GM12878 (cell line): ENCODE measurements at regions of chrX and their contacts with region 1.

Region 1: GRCh38 chrX:16123222-16123786 is at the start of gene GRPR:
- DNase-seq: no peak
- ATAC-seq: peak; percentile 88
- H3K4me3 ChIP-seq: no peak within 1 kb of the TSS
- H3K27ac ChIP-seq: no peak within 1 kb of the TSS
- H3K4me1 ChIP-seq: peaks cover 15% of the 10 kb centered on the region
- H3K27me3 ChIP-seq: peaks cover 0 to 2% of the 10 kb centered on the region in 2 experiments; a peak in 1 of 4 replicates
- CTCF ChIP-seq: peak; percentile 76 to 83 (median 79)
- EP300 ChIP-seq: no peak
- POLR2A ChIP-seq: no peak
- RAD21 ChIP-seq: peak; percentile 61
- polyA plus RNA-seq, gene GRPR: 0.21 TPM in 1 of 2 experiments, not detected in the other

Region 2: GRCh38 chrX:15686818-15687685 is 436.3 kb before region 1 on chrX:
- CTCF ChIA-PET with region 1: no interaction called
- POLR2A ChIA-PET with region 1: no interaction called
- RAD21 ChIA-PET with region 1: no interaction called
- SMC1A ChIA-PET with region 1: no interaction called
- in situ Hi-C with region 1: no loop called
- intact Hi-C with region 1: loop called (anchors 10 kb)
- DNase-seq: peak; percentile 34
- ATAC-seq: peak; percentile 97
- H3K4me3 ChIP-seq: no peak overlapping the region
- H3K27ac ChIP-seq: no peak overlapping the region
- H3K4me1 ChIP-seq: no peaks in the 10 kb centered on the region
- H3K27me3 ChIP-seq: no peaks in the 10 kb centered on the region
- CTCF ChIP-seq: peak; percentile 85
- EP300 ChIP-seq: no peak
- POLR2A ChIP-seq: no peak
- RAD21 ChIP-seq: peak; percentile 74

Region 3: GRCh38 chrX:16012250-16012649 is 111.1 kb before region 1 on chrX:
- CTCF ChIA-PET with region 1: no interaction called
- POLR2A ChIA-PET with region 1: no interaction called
- RAD21 ChIA-PET with region 1: no interaction called
- SMC1A ChIA-PET with region 1: no interaction called
- in situ Hi-C with region 1: no loop called
- intact Hi-C with region 1: no loop called
- DNase-seq: no peak
- ATAC-seq: no peak
- H3K4me3 ChIP-seq: no peak overlapping the region
- H3K27ac ChIP-seq: no peak overlapping the region
- H3K4me1 ChIP-seq: no peaks in the 10 kb centered on the region
- H3K27me3 ChIP-seq: no peaks in the 10 kb centered on the region
- CTCF ChIP-seq: no peak
- EP300 ChIP-seq: no peak
- POLR2A ChIP-seq: no peak
- RAD21 ChIP-seq: no peak

Region 4: DNA sequence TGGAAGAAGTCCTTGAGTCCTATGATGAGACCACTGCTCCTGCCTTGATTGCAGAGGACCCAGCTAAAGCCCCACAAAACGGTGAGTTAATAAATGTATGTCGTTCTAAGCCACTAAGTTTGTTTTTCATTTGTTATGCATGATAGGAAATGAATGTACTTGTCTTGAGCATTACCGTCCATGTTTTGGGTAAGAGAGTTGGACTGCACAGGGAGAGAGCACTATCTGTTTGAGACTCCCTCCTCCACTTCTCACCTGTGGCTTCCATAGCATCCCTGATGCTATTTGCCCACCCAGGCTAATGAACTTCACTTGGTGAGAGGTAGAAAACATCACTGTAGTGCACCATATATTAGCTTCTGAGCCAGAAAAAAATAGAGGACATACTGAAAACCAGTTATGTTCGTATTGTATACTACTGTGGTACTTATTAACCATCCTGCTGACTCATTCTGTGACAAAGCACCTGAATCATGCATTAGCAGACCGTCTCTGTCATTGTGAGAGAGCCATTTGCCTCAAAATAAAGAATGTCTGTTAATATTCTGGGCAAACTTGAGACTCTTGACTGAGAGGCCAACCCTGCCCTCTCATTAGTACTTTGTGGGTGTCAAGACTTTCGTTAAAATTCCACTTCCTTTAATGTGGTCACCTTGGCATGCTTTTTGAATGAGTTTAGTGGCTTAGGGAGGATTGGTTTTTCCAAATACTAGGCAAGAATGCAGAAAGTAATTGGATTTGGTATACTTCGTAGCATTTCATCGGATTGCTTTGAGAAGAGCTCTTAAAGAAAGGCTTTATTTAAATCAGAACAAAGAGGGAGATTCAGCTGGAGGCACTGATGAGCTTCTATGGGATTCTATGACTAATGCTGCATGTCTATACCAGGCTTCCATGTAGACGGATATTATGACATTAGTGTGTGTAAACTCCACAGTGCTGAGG is 99.2 kb before region 1 on chrX:
- CTCF ChIA-PET with region 1: interaction called, 4 read pairs
- POLR2A ChIA-PET with region 1: no interaction called
- RAD21 ChIA-PET with region 1: interaction called, 4 read pairs
- SMC1A ChIA-PET with region 1: interaction called, 25 read pairs
- in situ Hi-C with region 1: no loop called
- intact Hi-C with region 1: loop called (anchors 5 kb)
- DNase-seq: peak; percentile 77
- ATAC-seq: peak; percentile 96
- H3K4me3 ChIP-seq: no peak overlapping the region
- H3K27ac ChIP-seq: peak overlapping the region; percentile 24; the same call in 1 of the 2 replicates
- H3K4me1 ChIP-seq: peaks cover 4% of the 10 kb centered on the region; the same call in 1 of the 2 replicates
- H3K27me3 ChIP-seq: 0 out of 4 replicates have a peak, but pooled peaks cover 0 to 2% of the 10 kb centered on the region in 2 experiments
- CTCF ChIP-seq: no peak
- EP300 ChIP-seq: peak; percentile 84 to 88; a peak in 3 of 4 replicates
- POLR2A ChIP-seq: no peak
- RAD21 ChIP-seq: no peak

Region 5: GRCh38 chrX:16112428-16112827 is 10.9 kb before region 1 on chrX:
- CTCF ChIA-PET with region 1: interaction called, 12 read pairs
- POLR2A ChIA-PET with region 1: no interaction called
- RAD21 ChIA-PET with region 1: interaction called, 3 read pairs
- SMC1A ChIA-PET with region 1: interaction called, 14 read pairs
- in situ Hi-C with region 1: no loop called
- intact Hi-C with region 1: no loop called
- DNase-seq: no peak
- ATAC-seq: no peak; the same call in 2 of the 3 replicates
- H3K4me3 ChIP-seq: no peak overlapping the region
- H3K27ac ChIP-seq: no peak overlapping the region
- H3K4me1 ChIP-seq: peaks cover 4% of the 10 kb centered on the region; the same call in 1 of the 2 replicates
- H3K27me3 ChIP-seq: no peaks in the 10 kb centered on the region
- CTCF ChIP-seq: no peak
- EP300 ChIP-seq: no peak
- POLR2A ChIP-seq: no peak
- RAD21 ChIP-seq: no peak

Region 6: GRCh38 chrX:16212436-16212835 is 89.1 kb after region 1 on chrX:
- CTCF ChIA-PET with region 1: interaction called, 25 read pairs
- POLR2A ChIA-PET with region 1: no interaction called
- RAD21 ChIA-PET with region 1: interaction called, 15 read pairs
- SMC1A ChIA-PET with region 1: interaction called, 21 read pairs
- in situ Hi-C with region 1: no loop called
- intact Hi-C with region 1: no loop called
- DNase-seq: no peak
- ATAC-seq: peak; percentile 84
- H3K4me3 ChIP-seq: no peak overlapping the region
- H3K27ac ChIP-seq: no peak overlapping the region
- H3K4me1 ChIP-seq: no peaks in the 10 kb centered on the region
- H3K27me3 ChIP-seq: no peaks in the 10 kb centered on the region
- CTCF ChIP-seq: peak; percentile 39 to 48 (median 45); a peak in 4 of 6 replicates
- EP300 ChIP-seq: no peak
- POLR2A ChIP-seq: no peak
- RAD21 ChIP-seq: peak; percentile 63

Region 7: DNA sequence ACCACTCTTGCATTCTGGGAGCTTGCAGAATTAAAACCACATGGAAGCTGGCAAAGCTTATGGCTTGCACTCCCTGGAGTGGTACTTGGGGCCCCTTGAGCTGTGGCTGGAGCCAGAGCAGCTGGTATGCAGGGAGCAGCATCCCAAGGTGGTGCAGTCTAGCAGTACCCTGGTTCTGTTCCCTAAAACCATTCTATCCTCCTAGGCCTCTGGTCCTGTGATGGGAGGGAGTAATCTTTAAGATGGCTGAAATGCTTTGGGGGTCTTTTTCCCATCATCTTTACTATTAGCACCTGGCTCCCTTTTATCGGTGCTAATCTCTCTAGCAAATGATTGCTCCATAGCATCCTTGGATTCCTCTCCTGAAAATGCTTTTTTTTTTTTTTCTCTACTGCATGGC is 100.1 kb after region 1 on chrX:
- CTCF ChIA-PET with region 1: no interaction called
- POLR2A ChIA-PET with region 1: no interaction called
- RAD21 ChIA-PET with region 1: no interaction called
- SMC1A ChIA-PET with region 1: no interaction called
- in situ Hi-C with region 1: no loop called
- intact Hi-C with region 1: no loop called
- DNase-seq: no peak
- ATAC-seq: no peak
- H3K4me3 ChIP-seq: no peak overlapping the region
- H3K27ac ChIP-seq: no peak overlapping the region
- H3K4me1 ChIP-seq: no peaks in the 10 kb centered on the region
- H3K27me3 ChIP-seq: no peaks in the 10 kb centered on the region; a peak in 1 of 4 replicates
- CTCF ChIP-seq: no peak
- EP300 ChIP-seq: no peak
- POLR2A ChIP-seq: no peak
- RAD21 ChIP-seq: no peak